Posterior cingulate gyrus (tissue), 11 donors: ENCODE measurements at regions of chr12 and their contacts with region 1.

Region 1: GRCh38 chr12:131949431-131950181 is at the start of gene EP400:
- DNase-seq: peak; percentile 86 to 98 (median 90)

Region 2: GRCh38 chr12:131894313-131894860 is 55.2 kb before region 1 on chr12 and contains the start of gene ULK1:
- intact Hi-C with region 1: loop called (anchors 1 kb)
- DNase-seq: peak; percentile 84 to 99 (median 93)

Region 3: GRCh38 chr12:132228476-132229192 is 279.0 kb after region 1 on chr12:
- intact Hi-C with region 1: no loop called
- DNase-seq: peak in 2 of 10 donors; percentile 60 to 64